ENCODE measurements at regions of chr3 and their contacts with region 1.

Region 1: DNA sequence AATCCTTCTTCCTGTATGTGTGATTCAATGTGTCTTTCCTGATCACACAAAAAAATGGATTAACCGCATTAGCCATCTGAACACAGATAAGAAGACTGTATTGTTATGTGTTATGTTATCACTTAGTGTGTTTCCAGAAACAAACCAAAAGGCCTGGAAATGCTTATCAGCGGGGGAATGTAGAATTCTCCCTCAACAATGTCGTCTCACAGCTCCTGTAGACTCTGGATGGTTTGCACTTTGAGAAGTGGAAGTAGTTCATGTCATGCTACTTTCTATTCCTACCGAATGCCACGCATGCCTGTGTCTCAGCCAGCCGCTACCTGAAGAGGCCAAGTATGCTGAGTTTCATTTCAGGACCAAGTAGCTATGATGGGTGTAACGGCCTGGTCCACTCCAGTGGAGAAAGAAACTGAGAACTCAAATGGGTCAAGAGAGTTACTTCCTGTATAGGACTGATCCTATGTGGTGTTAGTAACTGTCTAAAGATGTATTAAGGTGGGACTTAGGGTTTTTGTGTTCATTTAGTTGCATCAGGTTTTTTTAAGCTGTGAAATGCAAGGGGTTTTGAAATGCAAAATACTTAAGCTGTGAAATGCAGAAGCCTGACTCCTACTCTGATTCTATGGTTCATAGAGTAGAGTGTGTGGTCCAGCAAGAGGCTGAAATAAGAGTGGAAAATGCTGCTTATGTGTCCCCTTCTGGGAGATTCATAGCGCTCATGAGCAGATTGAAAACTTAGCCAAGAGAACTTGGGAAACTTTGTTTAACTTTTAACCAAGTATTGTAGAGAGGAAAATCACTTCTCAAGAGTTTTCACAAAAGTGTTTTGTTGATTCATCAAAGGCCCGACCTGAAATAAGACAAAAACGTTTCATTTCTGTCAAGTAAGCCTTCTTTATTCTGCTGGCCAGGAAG is 118.5 kb upstream of the LMOD3 start:
- DNase-seq: no peak
- ATAC-seq: no peak
- H3K4me3 ChIP-seq: no peak overlapping the region
- H3K27ac ChIP-seq: no peak overlapping the region
- H3K4me1 ChIP-seq: peaks cover 5% of the 10 kb centered on the region; the same call in 1 of the 2 replicates
- H3K27me3 ChIP-seq: no peaks in the 10 kb centered on the region
- CTCF ChIP-seq: no peak

Region 2: DNA sequence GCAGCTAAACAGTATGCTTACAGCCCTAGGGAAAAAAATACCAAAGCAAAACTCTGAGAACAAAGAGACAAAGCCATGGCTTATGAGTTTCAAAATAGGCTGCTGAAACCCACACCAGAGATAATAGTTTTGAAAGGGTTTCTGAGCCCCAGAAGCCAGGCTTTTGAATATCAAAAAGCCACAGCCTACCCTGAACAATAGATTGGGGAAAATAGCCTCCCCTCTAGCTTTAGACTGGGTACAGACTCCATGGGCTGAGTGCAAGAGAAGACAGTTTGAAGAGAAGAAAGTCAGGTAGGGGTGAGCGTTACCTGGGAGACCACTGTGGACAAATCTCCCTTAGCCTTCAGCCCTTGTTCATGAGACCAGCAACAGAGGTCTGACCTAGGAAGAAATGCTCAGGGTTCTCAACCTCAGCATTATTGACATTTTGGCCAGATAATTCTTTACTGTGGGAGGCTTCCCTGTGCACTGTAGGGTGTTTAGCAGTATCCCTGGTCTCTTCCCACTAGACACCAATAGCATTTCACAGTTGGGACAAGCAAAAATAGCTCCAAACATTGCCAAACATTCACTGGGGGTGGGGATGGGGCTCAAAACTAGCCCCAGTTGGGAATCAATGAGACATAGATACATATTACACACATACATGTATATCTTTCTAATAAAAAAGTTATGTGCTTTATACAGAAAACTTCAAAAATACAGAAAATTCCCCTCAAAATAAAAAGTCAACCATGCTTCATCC is 297.0 kb before region 1 on chr3:
- CTCF ChIA-PET with region 1: no interaction called
- POLR2A ChIA-PET with region 1: no interaction called
- intact Hi-C with region 1: no loop called
- DNase-seq: no peak
- ATAC-seq: no peak
- H3K4me3 ChIP-seq: no peak overlapping the region
- H3K27ac ChIP-seq: no peak overlapping the region
- H3K4me1 ChIP-seq: no peaks in the 10 kb centered on the region
- H3K27me3 ChIP-seq: peaks cover 7% of the 10 kb centered on the region; the same call in 1 of the 2 replicates
- CTCF ChIP-seq: no peak

Region 3: DNA sequence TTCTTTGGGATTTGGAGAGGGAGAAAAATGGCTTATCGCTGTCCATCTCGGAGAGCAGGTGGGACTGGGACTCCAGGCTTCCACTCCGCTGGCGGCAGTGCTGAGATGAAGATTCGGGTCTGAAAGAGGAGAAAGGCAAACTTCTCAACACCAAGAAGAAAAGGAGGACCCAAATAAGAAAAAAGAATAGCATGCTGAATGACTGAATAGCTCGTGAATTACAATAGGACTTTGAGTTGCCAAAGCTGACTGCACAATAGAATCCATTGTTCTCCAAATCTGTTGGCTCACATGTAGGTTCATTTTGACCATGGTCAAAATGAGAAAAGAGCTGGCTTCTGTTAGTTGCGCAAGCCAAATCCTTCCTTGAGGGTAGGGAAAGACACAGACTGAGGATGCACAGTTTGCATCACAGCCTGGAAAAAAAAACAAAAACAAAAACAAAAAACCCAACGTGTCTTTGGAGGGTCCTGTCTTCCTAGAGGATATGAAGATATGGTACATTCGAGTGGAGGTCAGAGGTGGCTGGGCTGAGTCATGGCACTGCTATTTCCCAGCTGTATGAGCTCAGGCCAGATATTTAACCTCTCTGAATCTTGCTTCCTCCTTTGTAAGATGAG is 59.2 kb before region 1 on chr3:
- CTCF ChIA-PET with region 1: no interaction called
- POLR2A ChIA-PET with region 1: no interaction called
- intact Hi-C with region 1: loop called (anchors 2 kb)
- DNase-seq: peak; percentile 48
- ATAC-seq: peak; percentile 52
- H3K4me3 ChIP-seq: no peak overlapping the region
- H3K27ac ChIP-seq: no peak overlapping the region
- H3K4me1 ChIP-seq: peaks cover 39% of the 10 kb centered on the region
- H3K27me3 ChIP-seq: no peaks in the 10 kb centered on the region
- CTCF ChIP-seq: no peak

Region 4: DNA sequence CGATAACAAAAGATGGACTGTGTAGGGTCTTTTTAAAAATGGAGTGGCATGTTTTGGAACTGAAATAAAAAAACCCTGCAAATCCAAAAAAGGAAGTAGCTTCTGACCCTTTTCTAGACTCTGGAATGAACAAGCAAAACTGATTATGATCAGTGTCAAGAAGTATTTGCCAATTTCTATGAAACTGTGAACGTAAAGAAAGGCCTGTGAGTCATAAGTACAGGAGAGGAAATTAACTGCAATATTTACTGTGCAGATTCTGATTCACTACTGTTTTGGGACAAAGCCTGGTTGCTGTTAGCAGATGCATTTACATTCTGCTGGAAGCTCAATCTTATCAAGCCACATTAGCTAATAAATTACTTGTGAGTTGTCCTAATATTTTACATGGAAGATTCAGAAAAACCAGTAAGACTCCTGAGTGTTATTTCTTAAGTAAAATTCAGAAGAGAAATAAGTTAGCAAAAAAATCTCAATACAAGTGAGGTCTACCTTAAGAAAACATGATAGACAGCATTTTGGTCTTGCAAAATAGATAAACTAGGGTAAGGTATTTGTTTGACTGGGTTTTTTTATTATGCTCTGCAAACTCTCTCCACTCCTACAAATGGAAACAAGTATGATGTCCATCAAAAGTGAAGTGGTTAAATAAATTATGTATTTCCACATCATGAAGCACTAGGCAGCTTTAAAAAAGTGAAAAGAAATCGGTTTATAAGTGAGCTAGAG is 28.3 kb before region 1 on chr3:
- CTCF ChIA-PET with region 1: no interaction called
- POLR2A ChIA-PET with region 1: interaction called, 8 read pairs
- intact Hi-C with region 1: loop called (anchors 1 kb)
- DNase-seq: peak; percentile 77
- ATAC-seq: peak; percentile 85
- H3K4me3 ChIP-seq: no peak overlapping the region
- H3K27ac ChIP-seq: peak overlapping the region; percentile 85
- H3K4me1 ChIP-seq: peaks cover 18% of the 10 kb centered on the region
- H3K27me3 ChIP-seq: no peaks in the 10 kb centered on the region
- CTCF ChIP-seq: no peak

Region 5: DNA sequence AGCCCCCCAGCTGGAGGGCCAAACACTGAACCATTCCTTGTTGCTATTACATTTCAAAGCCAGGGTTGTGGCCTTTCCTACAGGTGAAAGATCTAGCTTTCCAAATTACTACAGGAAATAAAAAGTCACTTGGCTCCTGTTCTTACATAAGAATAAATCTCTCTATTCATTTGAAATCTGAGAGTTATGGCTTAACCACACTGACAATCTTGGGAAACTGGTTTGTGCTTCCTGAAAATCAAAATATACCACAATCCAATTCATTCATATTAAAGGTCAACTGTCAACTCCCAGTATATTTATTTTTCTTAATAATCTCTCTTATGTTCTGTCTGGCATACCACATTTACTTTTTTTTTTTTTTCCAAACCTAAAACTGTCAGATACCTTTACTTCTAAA is 14.8 kb before region 1 on chr3:
- CTCF ChIA-PET with region 1: no interaction called
- POLR2A ChIA-PET with region 1: no interaction called
- intact Hi-C with region 1: no loop called
- DNase-seq: peak; percentile 67
- ATAC-seq: peak; percentile 48; the same call in 1 of the 2 replicates
- H3K4me3 ChIP-seq: no peak overlapping the region
- H3K27ac ChIP-seq: peak overlapping the region; percentile 62
- H3K4me1 ChIP-seq: peaks cover 13% of the 10 kb centered on the region
- H3K27me3 ChIP-seq: no peaks in the 10 kb centered on the region
- CTCF ChIP-seq: no peak